Dorsolateral prefrontal cortex (tissue), 120 donors: ENCODE measurements at regions of chr18 and their contacts with region 1.

Region 1: DNA sequence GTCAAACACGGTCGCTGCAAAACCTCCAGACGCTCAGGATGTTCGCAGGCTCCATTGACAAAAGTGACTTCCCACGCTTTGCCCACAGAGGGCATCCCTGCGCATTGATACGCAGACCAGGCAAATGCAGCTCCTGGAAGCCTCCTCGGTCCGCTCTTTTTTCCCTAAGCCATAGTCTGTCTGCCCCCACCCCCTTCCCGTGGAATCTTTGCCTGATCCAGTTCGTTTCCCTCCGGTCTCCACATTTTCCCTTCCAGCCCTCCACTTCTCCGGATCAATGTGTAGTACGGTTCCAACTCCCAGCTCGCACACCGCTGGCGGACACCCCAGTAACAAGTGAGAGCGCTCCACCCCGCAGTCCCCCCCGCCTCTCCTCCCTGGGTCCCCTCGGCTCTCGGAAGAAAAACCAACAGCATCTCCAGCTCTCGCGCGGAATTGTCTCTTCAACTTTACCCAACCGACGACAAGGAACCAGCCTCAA is at the start of gene DCC:
- DNase-seq: peak; percentile 15 to 81 (median 76)
- H3K4me3 ChIP-seq: peak within 1 kb of the TSS; percentile 45 to 77 (median 62)
- H3K27ac ChIP-seq: peak within 1 kb of the TSS in 21 of 59 donors; percentile 6 to 86 (median 66)
- H3K27me3 ChIP-seq: peaks cover 0 to 52% (median 12%) of the 10 kb centered on the region in 45 donors
- CTCF ChIP-seq: peak; percentile 8 to 82 (median 63)
- total RNA-seq, gene DCC: 9.7 to 54.6 (median 23.8) TPM

Region 2: DNA sequence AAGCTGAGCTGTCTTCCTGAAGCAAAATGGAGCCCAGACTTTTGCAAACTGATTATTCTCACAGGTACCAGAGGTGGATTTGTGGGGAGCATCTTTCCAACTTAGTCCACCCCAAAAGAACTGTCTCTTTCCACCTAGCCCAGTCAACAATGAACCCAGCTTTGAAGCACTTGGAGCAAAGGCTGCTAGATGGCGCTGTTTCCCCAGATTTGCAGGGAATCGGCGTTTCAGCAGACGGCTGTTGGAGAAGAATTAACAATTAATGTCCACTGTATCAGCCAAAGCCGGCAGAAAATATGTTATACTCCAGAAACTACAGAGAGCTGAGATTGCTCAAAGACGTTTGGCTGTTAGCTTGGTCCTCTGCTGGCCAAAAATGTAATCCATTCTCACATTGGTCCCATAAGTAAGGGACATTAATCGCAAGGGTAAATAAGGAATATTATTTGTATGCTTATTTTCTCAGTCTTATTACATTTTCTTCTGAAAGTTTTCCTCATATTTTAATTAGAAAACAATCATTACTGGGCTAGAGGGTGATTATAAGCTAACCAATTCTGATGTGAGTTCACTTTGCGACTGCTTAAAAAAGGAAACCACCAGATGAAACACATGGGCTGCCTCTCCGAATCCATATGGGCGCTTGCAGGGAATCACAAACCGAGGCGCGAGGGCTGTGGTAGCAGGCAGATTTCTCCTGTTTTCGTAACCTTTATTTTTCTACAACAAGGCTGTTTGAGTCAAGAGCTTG is 718.6 kb before region 1 on chr18:
- intact Hi-C with region 1: loop called in 1 of 2 experiments (anchors 10 kb)
- DNase-seq: peak; percentile 57 to 87 (median 80)
- H3K4me3 ChIP-seq: peak overlapping the region in 48 of 59 donors; percentile 3 to 56 (median 26)
- H3K27ac ChIP-seq: no peak overlapping the region
- H3K27me3 ChIP-seq: no peaks in the 10 kb centered on the region
- CTCF ChIP-seq: peak; percentile 66 to 93 (median 84)

Region 3: DNA sequence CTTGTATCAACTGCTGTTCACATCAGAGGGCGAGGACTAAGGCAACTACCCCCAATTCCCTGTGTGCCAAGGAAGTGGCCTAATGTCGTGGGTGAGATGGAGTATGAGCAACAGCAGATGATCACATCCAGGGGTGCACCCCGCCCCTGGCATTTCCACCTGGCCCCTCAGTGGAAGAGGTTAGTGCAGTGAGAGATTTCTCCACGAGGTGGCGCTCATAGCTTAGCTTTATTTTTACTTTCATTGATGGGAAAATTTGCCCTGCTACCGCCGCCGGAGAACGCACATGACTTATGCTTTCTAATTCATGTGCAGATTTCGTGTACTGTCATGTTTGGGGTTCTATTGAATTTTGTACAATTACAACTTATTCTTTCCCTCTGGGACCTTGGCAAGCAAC is 671.8 kb before region 1 on chr18:
- intact Hi-C with region 1: loop called in 1 of 2 experiments (anchors 10 kb)
- DNase-seq: peak; percentile 32 to 80 (median 58)
- H3K4me3 ChIP-seq: peak overlapping the region in 35 of 59 donors; percentile 4 to 59 (median 31)
- H3K27ac ChIP-seq: no peak overlapping the region
- H3K27me3 ChIP-seq: no peaks in the 10 kb centered on the region
- CTCF ChIP-seq: peak; percentile 75 to 98 (median 90)

Region 4: DNA sequence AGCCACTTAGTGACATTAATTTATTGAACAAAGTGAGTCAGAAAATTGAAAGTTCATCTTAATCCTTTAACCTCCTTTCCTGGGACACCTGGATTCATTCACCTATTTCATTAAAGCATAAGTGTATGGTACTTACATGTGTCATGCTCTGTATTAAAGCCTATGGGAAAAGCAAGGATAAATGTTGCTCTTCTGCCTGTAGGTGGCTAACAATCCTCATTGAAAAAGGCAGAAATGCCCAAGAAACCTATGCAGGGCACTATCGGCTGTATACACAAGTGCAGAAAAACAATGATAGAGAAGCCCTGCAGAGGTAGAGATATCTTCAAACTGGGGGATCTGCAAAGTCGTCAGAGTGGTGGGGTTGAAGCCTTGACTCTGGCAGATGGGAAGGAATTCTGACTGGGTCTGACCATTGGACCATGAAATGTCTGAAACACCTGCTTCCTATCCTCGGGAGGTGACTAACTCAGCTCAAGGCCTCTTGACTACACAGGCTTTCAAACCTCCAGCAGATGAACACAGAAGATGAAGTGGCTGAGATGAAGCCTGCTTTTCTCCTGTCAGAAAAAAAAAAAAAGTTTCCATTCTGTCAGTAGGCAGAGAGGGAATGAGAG is 83.2 kb after region 1 on chr18:
- intact Hi-C with region 1: loop called (anchors 5 to 10 kb)
- DNase-seq: no peak
- H3K4me3 ChIP-seq: no peak overlapping the region
- H3K27ac ChIP-seq: no peak overlapping the region
- H3K27me3 ChIP-seq: no peaks in the 10 kb centered on the region
- CTCF ChIP-seq: peak in 14 of 56 donors; percentile 4 to 33 (median 14)

Region 5: GRCh38 chr18:52439457-52439856 is 99.5 kb after region 1 on chr18:
- intact Hi-C with region 1: loop called in 1 of 2 experiments (anchors 5 kb)
- DNase-seq: no peak
- H3K4me3 ChIP-seq: no peak overlapping the region
- H3K27ac ChIP-seq: no peak overlapping the region
- H3K27me3 ChIP-seq: peaks cover 0 to 2% (median 0%) of the 10 kb centered on the region in 45 donors
- CTCF ChIP-seq: no peak

Region 6: GRCh38 chr18:52670896-52671295 is 331.0 kb after region 1 on chr18:
- intact Hi-C with region 1: loop called (anchors 5 to 10 kb)
- DNase-seq: no peak
- H3K4me3 ChIP-seq: no peak overlapping the region
- H3K27ac ChIP-seq: no peak overlapping the region
- H3K27me3 ChIP-seq: no peaks in the 10 kb centered on the region
- CTCF ChIP-seq: peak in 54 of 56 donors; percentile 18 to 75 (median 51)